HepG2 (cell line): ENCODE measurements at regions of chr6 and their contacts with region 1.

Region 1: DNA sequence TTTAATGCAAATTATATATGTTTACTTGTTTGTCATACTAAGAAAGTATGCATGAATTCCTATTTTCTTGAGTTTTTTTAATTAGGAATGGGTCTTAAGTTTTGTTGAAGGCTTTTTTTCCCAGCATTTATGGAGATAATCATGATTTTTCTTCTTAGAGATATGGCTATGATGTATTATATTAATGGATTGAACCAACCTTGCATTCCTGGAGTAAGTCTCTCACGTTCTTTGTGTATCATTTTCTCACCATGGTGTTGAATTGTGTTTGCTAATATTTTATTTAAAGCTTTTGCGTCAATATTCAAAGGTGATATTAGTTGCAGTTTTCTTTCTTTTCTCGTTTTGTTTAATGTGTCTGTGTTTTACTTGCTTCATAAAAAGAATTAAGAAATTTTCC is 48.4 kb upstream of the SLC35D3 start:
- DNase-seq: no peak
- ATAC-seq: no peak
- H3K4me3 ChIP-seq: no peak overlapping the region
- H3K27ac ChIP-seq: no peak overlapping the region
- H3K4me1 ChIP-seq: no peaks in the 10 kb centered on the region
- H3K27me3 ChIP-seq: no peaks in the 10 kb centered on the region
- CTCF ChIP-seq: no peak
- EP300 ChIP-seq: no peak
- POLR2A ChIP-seq: no peak
- RAD21 ChIP-seq: no peak

Region 2: GRCh38 chr6:135842618-135843392 is 1030.9 kb before region 1 on chr6:
- CTCF ChIA-PET with region 1: no interaction called
- POLR2A ChIA-PET with region 1: no interaction called
- in situ Hi-C with region 1: no loop called
- intact Hi-C with region 1: loop called (anchors 5 kb)
- DNase-seq: no peak
- ATAC-seq: no peak
- H3K4me3 ChIP-seq: no peak overlapping the region
- H3K27ac ChIP-seq: no peak overlapping the region
- H3K4me1 ChIP-seq: no peaks in the 10 kb centered on the region
- H3K27me3 ChIP-seq: no peaks in the 10 kb centered on the region
- CTCF ChIP-seq: no peak
- EP300 ChIP-seq: no peak
- POLR2A ChIP-seq: no peak
- RAD21 ChIP-seq: no peak